ENCODE measurements at regions of chr4 and their contacts with region 1.

Region 1: DNA sequence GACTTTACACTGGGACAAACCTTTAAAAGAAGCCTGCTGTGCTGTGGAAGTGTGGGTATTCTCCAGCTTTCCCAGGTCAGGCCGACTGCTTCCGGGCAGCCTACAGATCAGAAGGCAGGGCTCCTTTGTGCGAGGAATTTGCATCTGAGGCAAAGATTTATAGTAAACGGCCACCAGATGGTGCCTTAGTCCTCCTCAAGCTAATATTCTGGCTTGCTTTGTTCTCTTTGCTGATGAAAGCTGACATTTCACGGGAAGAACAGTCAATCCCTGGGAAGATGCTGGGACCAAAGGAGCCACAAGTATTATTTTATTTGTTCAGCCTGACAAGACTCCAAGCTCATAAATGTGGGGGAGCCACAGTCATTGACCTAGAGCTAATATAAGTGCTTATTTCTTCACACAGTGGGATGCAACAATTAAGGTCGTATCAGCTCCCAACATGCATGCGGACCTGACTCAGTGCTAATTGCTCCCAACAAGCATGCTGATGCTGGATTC is 120.7 kb upstream of the TRIM2 start:
- DNase-seq: peak in 3 of 5 donors; percentile 26 to 41 (median 34)
- ATAC-seq: peak in 3 of 4 donors; percentile 72 to 93 (median 75)
- H3K4me3 ChIP-seq: no peak overlapping the region
- H3K27ac ChIP-seq: peak overlapping the region in 1 of 12 donors; percentile 10
- H3K4me1 ChIP-seq: peaks cover 0 to 14% (median 6%) of the 10 kb centered on the region in 12 donors
- H3K27me3 ChIP-seq: no peaks in the 10 kb centered on the region
- CTCF ChIP-seq: peak; percentile 28 to 71 (median 58)
- POLR2A ChIP-seq: no peak

Region 2: DNA sequence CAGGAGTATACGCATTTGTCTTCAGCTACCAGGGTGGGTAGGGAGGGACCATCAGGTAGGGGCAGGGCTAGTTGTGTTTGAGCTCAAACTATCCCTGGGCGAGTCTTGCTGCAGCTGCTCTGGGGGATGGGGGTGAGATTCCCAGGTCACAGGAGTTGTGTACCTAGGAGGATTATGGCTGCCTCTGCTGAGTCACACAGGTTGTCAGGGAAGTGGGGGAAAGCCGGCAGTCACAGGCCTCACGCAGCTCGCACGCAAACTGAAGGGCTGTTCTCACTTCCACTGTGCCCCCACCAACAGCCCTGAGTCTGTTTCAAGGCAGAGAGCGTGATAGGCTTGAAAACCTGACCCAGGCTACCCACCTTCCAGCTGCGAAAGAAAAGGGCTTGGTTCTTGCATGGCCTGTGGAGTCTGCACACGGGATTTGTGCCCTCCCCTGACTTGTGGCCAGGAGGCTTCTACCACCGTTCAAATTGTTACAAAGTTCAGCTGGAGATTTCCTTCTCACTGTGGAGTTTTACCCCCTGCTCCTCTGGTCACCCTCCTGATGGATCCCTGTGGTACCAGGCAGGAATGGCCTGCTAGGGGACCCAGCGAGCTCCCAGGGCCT is 239.9 kb before region 1 on chr4:
- intact Hi-C with region 1: loop called (anchors 1 to 2 kb)
- DNase-seq: no peak
- ATAC-seq: no peak
- H3K4me3 ChIP-seq: no peak overlapping the region
- H3K27ac ChIP-seq: no peak overlapping the region
- H3K4me1 ChIP-seq: no peaks in the 10 kb centered on the region
- H3K27me3 ChIP-seq: no peaks in the 10 kb centered on the region
- CTCF ChIP-seq: no peak
- POLR2A ChIP-seq: no peak

Region 3: DNA sequence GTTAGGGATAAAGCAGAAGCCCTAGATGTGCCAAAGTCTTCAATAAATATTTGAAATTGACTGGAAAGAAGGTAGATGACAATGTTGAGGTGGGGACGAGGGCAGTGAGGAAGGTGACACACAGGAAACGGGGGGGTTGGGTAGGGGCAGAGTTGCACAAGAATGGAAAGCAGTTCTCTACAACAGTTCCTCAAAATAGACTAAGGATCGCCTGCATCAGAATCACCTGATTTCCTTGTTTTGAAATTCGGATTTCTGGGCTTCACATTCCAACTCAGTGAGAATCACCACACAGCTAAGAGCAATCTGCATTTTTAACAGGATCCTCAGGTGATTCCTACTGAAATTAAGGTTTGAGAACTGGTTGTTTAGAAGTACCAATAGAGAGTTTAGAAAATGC is 233.1 kb before region 1 on chr4:
- intact Hi-C with region 1: loop called (anchors 1 to 2 kb)
- DNase-seq: peak in 3 of 5 donors; percentile 37 to 43 (median 42)
- ATAC-seq: peak; percentile 64 to 92 (median 83)
- H3K4me3 ChIP-seq: peak overlapping the region in 2 of 12 donors; percentile 0 to 10
- H3K27ac ChIP-seq: peak overlapping the region in 6 of 12 donors; percentile 32 to 51 (median 42)
- H3K4me1 ChIP-seq: peaks cover 0 to 18% (median 12%) of the 10 kb centered on the region in 12 donors
- H3K27me3 ChIP-seq: no peaks in the 10 kb centered on the region
- CTCF ChIP-seq: no peak
- POLR2A ChIP-seq: no peak

Region 4: GRCh38 chr4:152937336-152938236 is 145.9 kb before region 1 on chr4:
- intact Hi-C with region 1: loop called in 2 of 10 experiments (anchors 10 kb)
- DNase-seq: peak; percentile 27 to 73 (median 48)
- ATAC-seq: peak; percentile 26 to 61 (median 48)
- H3K4me3 ChIP-seq: peak overlapping the region; percentile 50 to 71 (median 59)
- H3K27ac ChIP-seq: peak overlapping the region in 2 of 12 donors; percentile 18 to 50
- H3K4me1 ChIP-seq: peaks cover 0 to 32% (median 12%) of the 10 kb centered on the region in 12 donors
- H3K27me3 ChIP-seq: peaks cover 10 to 68% (median 40%) of the 10 kb centered on the region in 9 donors
- CTCF ChIP-seq: no peak
- POLR2A ChIP-seq: no peak

Region 5: DNA sequence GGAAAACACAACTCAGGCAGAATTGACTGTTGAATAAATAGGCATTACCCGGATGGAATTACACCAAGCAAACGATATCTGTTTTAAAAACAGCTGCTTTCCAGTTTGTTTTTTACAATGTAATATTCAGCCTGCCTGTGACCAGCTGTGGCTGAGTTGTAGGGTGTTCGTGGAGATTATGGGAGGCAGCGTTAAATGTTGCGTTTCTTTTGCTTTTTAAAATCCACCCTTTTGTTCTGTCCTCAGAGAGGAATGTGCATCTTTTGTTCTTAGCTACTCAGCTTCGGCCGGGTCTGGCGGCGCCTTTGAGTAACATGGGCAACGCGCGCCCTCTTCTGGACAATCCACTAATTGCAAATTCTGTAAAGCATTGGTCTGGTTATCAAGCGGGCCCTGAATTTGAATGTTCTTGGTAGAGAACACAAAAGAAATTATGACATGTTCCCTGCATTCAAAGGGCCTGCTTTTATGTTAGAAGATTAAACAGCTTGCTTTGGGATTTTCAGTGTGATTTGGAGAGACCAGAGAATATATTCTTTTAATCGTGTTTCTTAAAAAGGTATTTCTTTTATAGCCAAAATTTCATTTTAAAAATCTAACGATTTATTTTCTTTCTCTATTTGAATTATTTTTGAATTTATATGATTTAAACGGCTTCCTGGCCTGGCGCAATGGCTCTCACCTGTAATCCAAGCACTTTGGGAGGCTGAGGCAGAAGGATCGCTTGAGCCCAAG is 44.4 kb after region 1 on chr4:
- intact Hi-C with region 1: loop called (anchors 1 to 5 kb)
- DNase-seq: peak; percentile 75 to 84 (median 81)
- ATAC-seq: peak; percentile 63 to 91 (median 84)
- H3K4me3 ChIP-seq: peak overlapping the region in 2 of 12 donors; percentile 11 to 32
- H3K27ac ChIP-seq: no peak overlapping the region
- H3K4me1 ChIP-seq: peaks cover 0 to 5% (median 0%) of the 10 kb centered on the region in 12 donors
- H3K27me3 ChIP-seq: no peaks in the 10 kb centered on the region
- CTCF ChIP-seq: peak; percentile 74 to 93 (median 84)
- POLR2A ChIP-seq: no peak